ENCODE measurements at regions of chr7 and their contacts with region 1.

Region 1: GRCh38 chr7:155694851-155695250 is 50.4 kb downstream of the RBM33 start:
- DNase-seq: no peak
- ATAC-seq: peak; percentile 49
- H3K4me3 Mint-ChIP-seq: no peak overlapping the region
- H3K27ac Mint-ChIP-seq: no peak overlapping the region
- H3K4me1 Mint-ChIP-seq: peaks cover 80% of the 10 kb centered on the region
- H3K27me3 Mint-ChIP-seq: no peaks in the 10 kb centered on the region
- CTCF ChIP-seq: no peak

Region 2: DNA sequence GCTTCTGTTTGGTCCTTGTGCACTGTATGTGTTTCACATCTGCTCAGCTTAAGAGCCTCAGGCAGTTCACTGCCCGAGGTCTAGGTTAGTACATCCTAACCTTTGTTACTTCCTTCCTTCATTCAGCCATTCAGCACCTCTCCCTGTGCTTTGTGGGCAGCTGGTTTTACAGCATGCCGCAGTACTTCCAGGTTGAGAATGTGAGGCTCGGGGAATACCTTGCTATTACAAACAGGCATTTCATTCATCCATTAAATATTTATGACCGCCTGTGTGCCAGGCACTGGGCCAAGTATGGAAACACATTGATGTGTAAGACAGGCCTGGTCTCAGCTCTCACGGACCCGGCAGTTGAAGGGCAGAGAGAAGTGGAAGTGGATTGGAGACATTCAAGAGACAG is 35.0 kb after region 1 on chr7:
- CTCF ChIA-PET with region 1: no interaction called
- POLR2A ChIA-PET with region 1: no interaction called
- intact Hi-C with region 1: loop called (anchors 5 kb)
- DNase-seq: no peak
- ATAC-seq: no peak
- H3K4me3 Mint-ChIP-seq: no peak overlapping the region
- H3K27ac Mint-ChIP-seq: peak overlapping the region; percentile 32
- H3K4me1 Mint-ChIP-seq: peaks cover 60% of the 10 kb centered on the region
- H3K27me3 Mint-ChIP-seq: no peaks in the 10 kb centered on the region
- CTCF ChIP-seq: no peak

Measured in activated CD8-positive, alpha-beta T cell treated with anti-CD3 and anti-CD28 coated beads for 36 hours (primary cell).